ENCODE measurements at regions of chr1 and their contacts with region 1.

Region 1: GRCh38 chr1:193565971-193566577 is 379.7 kb upstream of the B3GALT2 start:
- DNase-seq: no peak
- ATAC-seq: no peak
- H3K4me3 ChIP-seq: no peak overlapping the region
- H3K4me3 Mint-ChIP-seq: no peak overlapping the region
- H3K27ac ChIP-seq: no peak overlapping the region
- H3K27ac Mint-ChIP-seq: no peak overlapping the region
- H3K4me1 ChIP-seq: peaks cover 2% of the 10 kb centered on the region
- H3K4me1 Mint-ChIP-seq: peaks cover 25% of the 10 kb centered on the region
- H3K27me3 ChIP-seq: no peaks in the 10 kb centered on the region
- H3K27me3 Mint-ChIP-seq: no peaks in the 10 kb centered on the region
- CTCF ChIP-seq: no peak

Region 2: DNA sequence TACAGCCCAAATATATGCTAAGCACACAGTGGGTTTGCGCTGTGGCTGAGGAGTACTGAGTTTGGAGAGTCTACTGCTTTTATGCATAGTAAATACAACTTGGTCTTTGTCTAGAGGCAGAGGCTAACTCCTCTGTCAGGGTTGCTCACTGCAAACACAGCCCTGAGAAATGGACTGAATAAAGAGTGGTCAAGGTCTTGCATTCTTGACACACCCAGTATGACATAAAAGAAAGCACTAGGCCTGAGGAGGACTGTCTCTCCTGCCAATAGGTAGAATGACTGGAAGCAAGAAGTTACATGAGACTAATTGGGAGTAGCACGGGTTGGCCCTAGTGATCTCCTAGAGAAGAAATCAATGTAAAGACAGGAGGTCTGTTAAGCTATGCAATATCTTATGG is 12.5 kb before region 1 on chr1:
- CTCF ChIA-PET with region 1: no interaction called
- POLR2A ChIA-PET with region 1: no interaction called
- intact Hi-C with region 1: loop called in 1 of 2 experiments (anchors 1 kb)
- DNase-seq: no peak
- ATAC-seq: no peak
- H3K4me3 ChIP-seq: no peak overlapping the region
- H3K4me3 Mint-ChIP-seq: no peak overlapping the region
- H3K27ac ChIP-seq: no peak overlapping the region
- H3K27ac Mint-ChIP-seq: no peak overlapping the region
- H3K4me1 ChIP-seq: peaks cover 2% of the 10 kb centered on the region
- H3K4me1 Mint-ChIP-seq: peaks cover 4% of the 10 kb centered on the region
- H3K27me3 ChIP-seq: no peaks in the 10 kb centered on the region
- H3K27me3 Mint-ChIP-seq: no peaks in the 10 kb centered on the region
- CTCF ChIP-seq: no peak

Region 3: DNA sequence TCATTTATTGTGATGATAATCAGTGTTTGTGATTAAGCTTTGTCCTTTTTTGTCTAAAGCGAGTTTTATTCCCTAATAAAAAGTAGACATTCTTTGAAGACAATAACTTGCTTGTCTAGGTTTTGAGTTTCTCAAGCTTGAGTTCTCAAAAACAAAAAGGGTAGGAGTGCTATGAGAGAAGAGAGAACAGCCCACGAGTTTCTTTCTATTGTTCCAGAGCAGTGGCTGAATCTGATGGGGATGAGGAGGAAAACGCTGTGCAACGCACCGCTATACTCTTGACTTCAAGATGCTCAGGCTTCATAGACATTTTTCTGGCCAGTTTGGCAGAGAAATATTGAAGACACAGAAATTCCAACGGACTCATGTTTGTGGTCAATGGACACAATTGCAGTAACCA is 290.2 kb after region 1 on chr1:
- CTCF ChIA-PET with region 1: no interaction called
- POLR2A ChIA-PET with region 1: no interaction called
- intact Hi-C with region 1: no loop called
- DNase-seq: no peak
- ATAC-seq: no peak
- H3K4me3 ChIP-seq: no peak overlapping the region
- H3K4me3 Mint-ChIP-seq: no peak overlapping the region
- H3K27ac ChIP-seq: no peak overlapping the region
- H3K27ac Mint-ChIP-seq: no peak overlapping the region
- H3K4me1 ChIP-seq: no peaks in the 10 kb centered on the region
- H3K4me1 Mint-ChIP-seq: no peaks in the 10 kb centered on the region
- H3K27me3 ChIP-seq: no peaks in the 10 kb centered on the region
- H3K27me3 Mint-ChIP-seq: no peaks in the 10 kb centered on the region
- CTCF ChIP-seq: no peak

Measured in CD4-positive, alpha-beta T cell (primary cell).